ENCODE measurements at regions of chr9 and their contacts with region 1.

Region 1: GRCh38 chr9:35882263-35882848 is 12.2 kb upstream of the OR13J1 start:
- DNase-seq: peak; percentile 75
- H3K4me3 ChIP-seq: no peak overlapping the region
- H3K27ac ChIP-seq: no peak overlapping the region
- H3K4me1 ChIP-seq: peaks cover 5% of the 10 kb centered on the region
- H3K27me3 ChIP-seq: peaks cover 4 to 17% of the 10 kb centered on the region in 2 experiments
- CTCF ChIP-seq: peak; percentile 91 to 96
- POLR2A ChIP-seq: no peak

Region 2: DNA sequence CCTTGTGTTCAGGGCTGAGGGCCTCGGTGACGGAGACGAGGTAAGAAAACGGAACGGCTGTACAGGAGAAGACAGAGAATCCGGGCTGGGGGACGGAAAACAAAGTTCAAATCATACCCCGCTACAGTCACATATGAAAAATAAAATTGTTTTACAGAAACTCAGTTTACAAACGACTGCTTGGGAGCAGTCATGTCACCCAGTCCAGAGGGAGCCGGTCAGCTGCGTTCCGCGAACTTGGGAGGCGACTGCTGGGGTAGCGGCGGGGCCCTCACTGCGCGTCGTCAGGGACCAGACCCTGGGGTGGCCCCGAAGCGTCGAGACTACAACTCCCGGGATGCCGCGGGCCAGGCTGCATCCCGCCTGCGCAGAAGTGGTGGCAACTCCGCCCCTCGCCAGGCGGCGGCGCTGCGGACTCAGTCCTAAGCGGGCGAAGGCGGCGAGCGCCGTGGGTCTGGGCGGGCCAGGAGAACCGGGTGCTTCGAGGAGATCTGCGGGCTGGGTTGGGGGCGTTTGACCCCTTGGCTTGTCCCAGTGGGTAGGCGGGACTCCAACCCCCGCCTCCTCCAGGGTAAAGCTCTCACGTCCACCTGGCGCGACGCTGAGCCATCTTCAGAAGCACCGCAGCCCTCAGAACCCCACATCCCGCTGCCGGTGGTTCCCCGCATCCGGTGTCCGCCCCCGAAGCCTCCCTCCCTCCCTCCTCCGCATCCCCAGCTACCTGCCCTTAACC is 235.7 kb before region 1 on chr9:
- CTCF ChIA-PET with region 1: interaction called, 4 read pairs
- POLR2A ChIA-PET with region 1: no interaction called
- dilution Hi-C with region 1: no loop called
- intact Hi-C with region 1: loop called (anchors 5 kb)
- DNase-seq: peak; percentile 91
- H3K4me3 ChIP-seq: peak overlapping the region; percentile 39 to 80 (median 47)
- H3K27ac ChIP-seq: peak overlapping the region; percentile 24
- H3K4me1 ChIP-seq: peaks cover 6% of the 10 kb centered on the region
- H3K27me3 ChIP-seq: peaks cover 0 to 2% of the 10 kb centered on the region in 2 experiments
- CTCF ChIP-seq: peak; percentile 91 to 98
- POLR2A ChIP-seq: peak; percentile 27

Region 3: GRCh38 chr9:35814841-35815543 is 67.4 kb before region 1 on chr9 and contains the start of gene HINT2:
- CTCF ChIA-PET with region 1: interaction called, 11 read pairs
- POLR2A ChIA-PET with region 1: no interaction called
- dilution Hi-C with region 1: no loop called
- intact Hi-C with region 1: no loop called
- DNase-seq: peak; percentile 99
- H3K4me3 ChIP-seq: peak within 1 kb of the TSS; percentile 83 to 89 (median 85)
- H3K27ac ChIP-seq: peak within 1 kb of the TSS; percentile 44
- H3K4me1 ChIP-seq: peaks cover 21% of the 10 kb centered on the region
- H3K27me3 ChIP-seq: no peaks in the 10 kb centered on the region
- CTCF ChIP-seq: no peak
- POLR2A ChIP-seq: peak; percentile 93
- total RNA-seq, gene HINT2: 27.2 and 37.4 TPM in 2 replicates

Region 4: GRCh38 chr9:35835216-35835632 is 47.1 kb before region 1 on chr9:
- CTCF ChIA-PET with region 1: interaction called, 27 read pairs
- POLR2A ChIA-PET with region 1: no interaction called
- dilution Hi-C with region 1: no loop called
- intact Hi-C with region 1: no loop called
- DNase-seq: no peak
- H3K4me3 ChIP-seq: no peak overlapping the region
- H3K27ac ChIP-seq: no peak overlapping the region
- H3K4me1 ChIP-seq: no peaks in the 10 kb centered on the region
- H3K27me3 ChIP-seq: peaks cover 0 to 12% of the 10 kb centered on the region in 2 experiments
- CTCF ChIP-seq: peak; percentile 24 to 27
- POLR2A ChIP-seq: no peak

Region 5: GRCh38 chr9:35859310-35859989 is 22.9 kb before region 1 on chr9:
- CTCF ChIA-PET with region 1: interaction called, 27 read pairs
- POLR2A ChIA-PET with region 1: no interaction called
- dilution Hi-C with region 1: no loop called
- intact Hi-C with region 1: no loop called
- DNase-seq: no peak
- H3K4me3 ChIP-seq: no peak overlapping the region
- H3K27ac ChIP-seq: no peak overlapping the region
- H3K4me1 ChIP-seq: no peaks in the 10 kb centered on the region
- H3K27me3 ChIP-seq: peaks cover 22 to 51% of the 10 kb centered on the region in 2 experiments
- CTCF ChIP-seq: no peak
- POLR2A ChIP-seq: no peak

Region 6: DNA sequence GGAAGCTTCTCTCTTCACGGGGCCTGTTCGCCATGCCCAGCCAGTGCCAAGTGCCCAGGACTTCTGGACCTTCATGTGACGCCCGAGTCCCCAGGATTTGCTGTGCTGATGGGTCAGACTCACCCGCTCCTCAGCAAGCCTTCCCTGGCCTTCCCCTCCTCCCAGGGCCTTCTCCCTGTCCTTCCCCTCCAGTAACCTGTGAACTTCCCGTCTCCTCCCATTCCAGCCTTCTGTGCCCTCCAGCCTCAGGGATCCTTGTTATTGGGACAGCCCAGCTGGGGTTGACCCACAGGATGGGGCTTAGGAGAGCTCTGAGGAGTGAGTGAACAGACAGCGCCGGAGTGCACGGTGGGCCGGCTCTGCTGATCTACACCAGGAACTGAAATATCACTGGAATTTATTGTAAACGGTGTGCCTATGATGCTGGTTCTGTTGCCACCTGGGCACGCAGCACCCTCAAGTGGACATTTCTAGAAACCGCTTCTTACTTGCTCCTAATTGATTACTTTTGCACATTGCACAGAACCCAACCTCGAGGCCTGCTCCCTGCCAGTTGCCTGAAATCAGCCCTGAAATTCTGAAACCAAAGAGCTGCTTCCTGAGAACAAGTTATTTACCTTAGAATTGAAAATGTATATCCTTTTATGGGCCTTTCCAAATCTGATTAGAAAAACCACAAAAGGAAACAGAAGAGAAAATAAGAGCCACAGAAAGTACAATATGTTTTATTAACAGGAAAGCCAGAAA is 28.4 kb after region 1 on chr9:
- CTCF ChIA-PET with region 1: interaction called, 26 read pairs
- POLR2A ChIA-PET with region 1: no interaction called
- dilution Hi-C with region 1: no loop called
- intact Hi-C with region 1: no loop called
- DNase-seq: peak; percentile 86
- H3K4me3 ChIP-seq: peak overlapping the region in 2 of 3 experiments; percentile 4 to 53
- H3K27ac ChIP-seq: peak overlapping the region; percentile 94
- H3K4me1 ChIP-seq: peaks cover 68% of the 10 kb centered on the region
- H3K27me3 ChIP-seq: no peaks in the 10 kb centered on the region
- CTCF ChIP-seq: peak; percentile 60 to 65
- POLR2A ChIP-seq: peak; percentile 61

Region 7: DNA sequence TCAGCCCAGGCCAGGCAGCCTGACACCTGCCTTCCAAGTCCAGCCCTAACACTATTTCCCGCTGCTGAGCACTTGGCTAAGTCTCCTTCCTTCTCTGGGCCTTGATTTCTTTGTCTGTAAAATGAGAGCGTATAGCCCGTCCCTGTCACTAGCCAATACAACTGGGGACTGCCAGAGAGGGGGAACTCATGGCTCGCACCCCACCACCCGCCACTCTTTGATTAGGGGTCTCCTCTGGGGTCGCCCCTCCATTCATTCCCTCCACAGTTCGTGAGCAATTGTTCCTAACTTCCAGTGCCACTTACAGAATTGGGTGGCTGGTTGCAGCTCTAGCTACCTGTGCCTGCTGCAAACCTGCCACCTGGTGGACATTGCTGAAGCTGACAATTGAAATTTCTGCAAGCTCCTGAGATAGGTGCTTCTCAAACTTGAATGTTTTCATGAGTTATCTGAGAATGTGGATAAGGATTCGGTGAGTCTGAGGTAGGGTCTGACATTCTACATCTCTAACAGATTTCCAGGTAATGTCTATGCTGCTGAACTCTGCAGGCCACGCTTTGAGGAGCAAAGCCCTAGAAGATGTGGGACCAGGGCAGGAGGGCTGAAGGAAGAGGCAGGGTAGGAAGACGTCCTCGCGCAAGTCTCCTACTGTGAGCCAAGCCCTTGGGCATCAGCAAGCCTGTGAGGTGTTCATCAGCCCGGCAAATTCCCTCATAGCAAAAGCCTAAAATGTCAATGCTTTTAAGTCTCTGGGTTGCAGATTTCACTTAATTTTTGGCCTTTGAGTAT is 141.1 kb after region 1 on chr9:
- CTCF ChIA-PET with region 1: interaction called, 13 read pairs
- POLR2A ChIA-PET with region 1: no interaction called
- dilution Hi-C with region 1: no loop called
- intact Hi-C with region 1: no loop called
- DNase-seq: peak; percentile 71
- H3K4me3 ChIP-seq: no peak overlapping the region
- H3K27ac ChIP-seq: no peak overlapping the region
- H3K4me1 ChIP-seq: no peaks in the 10 kb centered on the region
- H3K27me3 ChIP-seq: no peaks in the 10 kb centered on the region
- CTCF ChIP-seq: peak; percentile 71 to 79
- POLR2A ChIP-seq: no peak